Gastrocnemius medialis (tissue), 4 donors: ENCODE measurements at regions of chr17 and their contacts with region 1.

Region 1: GRCh38 chr17:37299257-37299980 is 76.4 kb upstream of the C17orf78 start:
- DNase-seq: no peak
- ATAC-seq: peak; percentile 24 to 33
- H3K4me3 ChIP-seq: peak overlapping the region; percentile 40 to 51 (median 44)
- H3K27ac ChIP-seq: peak overlapping the region; percentile 79 to 89 (median 88)
- H3K4me1 ChIP-seq: peaks cover 28 to 39% of the 10 kb centered on the region in 2 donors
- H3K27me3 ChIP-seq: no peaks in the 10 kb centered on the region
- CTCF ChIP-seq: no peak
- POLR2A ChIP-seq: no peak

Region 2: GRCh38 chr17:37047631-37048104 is 251.8 kb before region 1 on chr17:
- in situ Hi-C with region 1: no loop called
- intact Hi-C with region 1: no loop called
- DNase-seq: peak; percentile 54 to 73
- ATAC-seq: peak; percentile 62 to 91
- H3K4me3 ChIP-seq: no peak overlapping the region
- H3K27ac ChIP-seq: no peak overlapping the region
- H3K4me1 ChIP-seq: peaks cover 0 to 5% of the 10 kb centered on the region in 2 donors
- H3K27me3 ChIP-seq: no peaks in the 10 kb centered on the region
- CTCF ChIP-seq: peak; percentile 55 to 88 (median 80)
- POLR2A ChIP-seq: no peak

Region 3: GRCh38 chr17:37327341-37328090 is 28.1 kb after region 1 on chr17:
- in situ Hi-C with region 1: no loop called
- intact Hi-C with region 1: loop called (anchors 2 kb)
- DNase-seq: peak; percentile 75 to 79
- ATAC-seq: peak; percentile 97 to 99
- H3K4me3 ChIP-seq: no peak overlapping the region
- H3K27ac ChIP-seq: peak overlapping the region; percentile 79 to 87 (median 84)
- H3K4me1 ChIP-seq: peaks cover 16 to 18% of the 10 kb centered on the region in 2 donors
- H3K27me3 ChIP-seq: no peaks in the 10 kb centered on the region
- CTCF ChIP-seq: no peak
- POLR2A ChIP-seq: no peak

Region 4: GRCh38 chr17:37358830-37359681 is 59.6 kb after region 1 on chr17:
- in situ Hi-C with region 1: no loop called
- intact Hi-C with region 1: loop called (anchors 1 kb)
- DNase-seq: peak; percentile 89 to 96
- ATAC-seq: peak; percentile 87
- H3K4me3 ChIP-seq: peak overlapping the region; percentile 86 to 96 (median 94)
- H3K27ac ChIP-seq: peak overlapping the region; percentile 93 to 98 (median 96)
- H3K4me1 ChIP-seq: peaks cover 19 to 22% of the 10 kb centered on the region in 2 donors
- H3K27me3 ChIP-seq: no peaks in the 10 kb centered on the region
- CTCF ChIP-seq: peak in 4 of 5 experiments; percentile 31 to 65 (median 59)
- POLR2A ChIP-seq: peak; percentile 87 to 93

Region 5: GRCh38 chr17:37373530-37374159 is 74.2 kb after region 1 on chr17:
- in situ Hi-C with region 1: no loop called
- intact Hi-C with region 1: loop called (anchors 5 kb)
- DNase-seq: peak; percentile 36 to 57
- ATAC-seq: peak; percentile 95 to 97
- H3K4me3 ChIP-seq: no peak overlapping the region
- H3K27ac ChIP-seq: no peak overlapping the region
- H3K4me1 ChIP-seq: no peaks in the 10 kb centered on the region
- H3K27me3 ChIP-seq: no peaks in the 10 kb centered on the region
- CTCF ChIP-seq: peak; percentile 77 to 96 (median 88)
- POLR2A ChIP-seq: no peak